T-cell (primary cell): ENCODE measurements at regions of chr2 and their contacts with region 1.

Region 1: GRCh38 chr2:42086500-42086953 is 38.7 kb downstream of the PKDCC start:
- DNase-seq: peak in 15 of 35 experiments; percentile 10 to 76 (median 30)
- ATAC-seq: peak; percentile 56 to 61 (median 58)
- H3K4me3 ChIP-seq: no peak overlapping the region
- H3K4me3 Mint-ChIP-seq: no peak overlapping the region
- H3K27ac ChIP-seq: no peak overlapping the region
- H3K27ac Mint-ChIP-seq: no peak overlapping the region
- H3K4me1 ChIP-seq: peaks cover 0 to 4% of the 10 kb centered on the region in 2 experiments
- H3K4me1 Mint-ChIP-seq: peaks cover 6 to 14% (median 10%) of the 10 kb centered on the region in 3 donors
- H3K27me3 ChIP-seq: peaks cover 0 to 7% of the 10 kb centered on the region in 2 experiments
- H3K27me3 Mint-ChIP-seq: peaks cover 5 to 7% of the 10 kb centered on the region in 2 donors

Region 2: DNA sequence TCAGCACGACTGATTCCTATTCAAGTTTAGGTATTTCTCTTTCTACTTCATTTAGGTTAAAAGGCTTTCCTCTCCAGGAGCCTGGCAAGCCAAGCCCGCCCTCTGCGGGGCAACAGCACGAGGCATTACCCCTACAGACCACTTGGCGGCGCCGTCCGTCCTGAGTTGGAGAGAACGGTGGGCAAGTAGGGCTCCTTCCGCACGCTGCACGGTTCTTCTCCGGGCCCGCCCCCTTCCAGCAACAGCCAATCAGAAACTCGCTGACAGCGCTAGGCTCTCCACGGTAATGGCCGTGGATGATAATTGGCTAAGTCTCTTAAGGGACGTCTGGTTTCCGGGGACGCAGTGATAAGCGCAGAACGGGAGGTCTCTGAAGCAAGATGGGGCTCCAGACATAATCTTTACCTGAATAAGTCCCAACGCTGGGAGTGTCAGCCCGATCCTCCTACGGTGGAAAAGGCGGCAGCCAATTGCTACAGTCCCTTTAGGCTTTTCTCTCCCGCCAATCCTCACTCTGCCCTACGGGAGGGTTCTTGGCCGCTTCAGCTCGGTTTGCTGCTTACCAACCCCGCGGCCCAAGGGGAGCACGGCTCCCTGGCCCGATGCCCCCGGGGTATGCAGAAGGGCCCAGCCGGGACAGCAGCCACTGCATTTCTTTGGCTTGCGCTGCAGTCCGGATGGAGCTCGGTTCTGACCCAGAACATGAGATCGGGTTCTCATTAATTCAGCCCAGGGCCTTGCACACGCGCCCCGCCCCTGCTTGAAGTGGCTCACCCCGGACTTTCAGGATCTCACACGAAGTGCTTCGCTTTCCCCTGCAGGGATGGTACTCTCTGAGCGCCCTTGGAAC is 245.6 kb before region 1 on chr2:
- CTCF ChIA-PET with region 1: interaction called, 4 to 11 read pairs
- POLR2A ChIA-PET with region 1: no interaction called
- DNase-seq: peak; percentile 94 to 99 (median 97)
- ATAC-seq: peak; percentile 99
- H3K4me3 ChIP-seq: peak overlapping the region; percentile 81 to 97
- H3K4me3 Mint-ChIP-seq: peak overlapping the region; percentile 90 to 94 (median 94)
- H3K27ac ChIP-seq: peak overlapping the region; percentile 87
- H3K27ac Mint-ChIP-seq: peak overlapping the region; percentile 95 to 97
- H3K4me1 ChIP-seq: peaks cover 0 to 17% of the 10 kb centered on the region in 2 experiments
- H3K4me1 Mint-ChIP-seq: peaks cover 8 to 13% (median 12%) of the 10 kb centered on the region in 3 donors
- H3K27me3 ChIP-seq: no peaks in the 10 kb centered on the region
- H3K27me3 Mint-ChIP-seq: peaks cover 19 to 27% of the 10 kb centered on the region in 2 donors

Region 3: GRCh38 chr2:41853427-41854216 is 232.9 kb before region 1 on chr2:
- CTCF ChIA-PET with region 1: interaction called in 1 of 2 experiments, 21 read pairs
- POLR2A ChIA-PET with region 1: no interaction called
- DNase-seq: peak in 1 of 35 experiments; percentile 40
- ATAC-seq: no peak
- H3K4me3 ChIP-seq: no peak overlapping the region
- H3K4me3 Mint-ChIP-seq: no peak overlapping the region
- H3K27ac ChIP-seq: no peak overlapping the region
- H3K27ac Mint-ChIP-seq: no peak overlapping the region
- H3K4me1 ChIP-seq: no peaks in the 10 kb centered on the region
- H3K4me1 Mint-ChIP-seq: no peaks in the 10 kb centered on the region
- H3K27me3 ChIP-seq: peaks cover 2 to 26% of the 10 kb centered on the region in 2 experiments
- H3K27me3 Mint-ChIP-seq: peaks cover 21 to 25% of the 10 kb centered on the region in 2 donors

Region 4: GRCh38 chr2:42147641-42148274 is 61.2 kb after region 1 on chr2:
- CTCF ChIA-PET with region 1: no interaction called
- POLR2A ChIA-PET with region 1: no interaction called
- DNase-seq: no peak
- ATAC-seq: no peak
- H3K4me3 ChIP-seq: no peak overlapping the region
- H3K4me3 Mint-ChIP-seq: no peak overlapping the region
- H3K27ac ChIP-seq: no peak overlapping the region
- H3K27ac Mint-ChIP-seq: peak overlapping the region in 1 of 2 donors; percentile 16
- H3K4me1 ChIP-seq: peaks cover 0 to under 1% of the 10 kb centered on the region in 2 experiments
- H3K4me1 Mint-ChIP-seq: peaks cover 13 to 23% (median 16%) of the 10 kb centered on the region in 3 donors
- H3K27me3 ChIP-seq: no peaks in the 10 kb centered on the region
- H3K27me3 Mint-ChIP-seq: no peaks in the 10 kb centered on the region